Naive thymus-derived CD4-positive, alpha-beta T cell (primary cell): ENCODE measurements at regions of chr10 and their contacts with region 1.

Region 1: GRCh38 chr10:3785257-3785850 is 345 bp upstream of the KLF6 start:
- DNase-seq: peak; percentile 99 to 100 (median 99)
- ATAC-seq: peak; percentile 86
- H3K4me3 ChIP-seq: peak overlapping the region; percentile 75
- H3K4me3 Mint-ChIP-seq: peak overlapping the region; percentile 85 to 99 (median 94)
- H3K27ac ChIP-seq: peak overlapping the region; percentile 99
- H3K27ac Mint-ChIP-seq: peak overlapping the region; percentile 93 to 99 (median 99)
- H3K4me1 ChIP-seq: peaks cover 21 to 30% of the 10 kb centered on the region in 2 donors
- H3K4me1 Mint-ChIP-seq: peaks cover 21 to 52% (median 37%) of the 10 kb centered on the region in 7 donors
- H3K27me3 ChIP-seq: no peaks in the 10 kb centered on the region
- H3K27me3 Mint-ChIP-seq: peaks cover 0 to 12% (median 0%) of the 10 kb centered on the region in 5 donors

Region 2: GRCh38 chr10:2202401-2202800 is 1583.0 kb before region 1 on chr10:
- CTCF ChIA-PET with region 1: no interaction called
- POLR2A ChIA-PET with region 1: no interaction called
- intact Hi-C with region 1: no loop called
- DNase-seq: no peak
- ATAC-seq: no peak
- H3K4me3 ChIP-seq: no peak overlapping the region
- H3K4me3 Mint-ChIP-seq: no peak overlapping the region
- H3K27ac ChIP-seq: no peak overlapping the region
- H3K27ac Mint-ChIP-seq: no peak overlapping the region
- H3K4me1 ChIP-seq: no peaks in the 10 kb centered on the region
- H3K4me1 Mint-ChIP-seq: no peaks in the 10 kb centered on the region
- H3K27me3 ChIP-seq: no peaks in the 10 kb centered on the region
- H3K27me3 Mint-ChIP-seq: peaks cover 0 to 20% (median 8%) of the 10 kb centered on the region in 5 donors

Region 3: DNA sequence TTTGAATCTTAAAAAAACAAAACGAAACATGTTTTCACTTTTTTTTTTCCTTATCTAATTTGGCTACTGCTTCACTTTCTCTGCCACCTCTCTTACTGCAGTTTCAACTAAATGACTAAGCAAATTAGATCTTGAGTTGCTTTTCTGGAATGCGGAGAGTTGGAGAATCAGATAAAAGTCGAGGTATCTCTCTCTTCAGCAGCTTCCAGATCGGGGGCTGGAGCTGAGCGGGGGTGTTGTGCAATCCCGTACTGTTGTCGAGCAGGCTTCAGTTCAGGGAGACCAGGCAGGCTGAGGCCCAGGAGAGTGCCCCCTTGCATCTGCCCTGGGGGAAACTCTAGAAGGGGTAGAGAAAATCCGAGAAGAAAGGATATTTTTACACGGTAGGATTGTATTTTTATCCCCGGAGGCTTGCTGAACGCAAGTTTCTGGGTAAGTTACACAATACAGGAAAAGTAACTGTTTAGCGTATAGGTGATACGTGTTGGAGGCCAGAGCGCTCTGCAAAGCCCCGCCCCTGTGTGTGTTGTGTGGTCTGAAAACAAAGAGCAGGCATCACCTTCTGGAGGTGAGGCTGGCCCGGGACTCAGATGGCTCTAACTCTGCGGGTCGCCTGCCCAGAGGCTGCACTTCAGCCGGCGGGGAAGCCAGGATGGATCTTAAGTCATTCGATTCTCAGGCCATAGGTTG is 116.9 kb before region 1 on chr10:
- CTCF ChIA-PET with region 1: no interaction called
- POLR2A ChIA-PET with region 1: interaction called, 17 read pairs
- intact Hi-C with region 1: loop called in 1 of 2 experiments (anchors 1 kb)
- DNase-seq: peak; percentile 34 to 85 (median 77)
- ATAC-seq: peak; percentile 91
- H3K4me3 ChIP-seq: peak overlapping the region; percentile 63
- H3K4me3 Mint-ChIP-seq: peak overlapping the region; percentile 82 to 98 (median 88)
- H3K27ac ChIP-seq: peak overlapping the region; percentile 65
- H3K27ac Mint-ChIP-seq: peak overlapping the region; percentile 36 to 96 (median 93)
- H3K4me1 ChIP-seq: peaks cover 33% of the 10 kb centered on the region in 2 donors
- H3K4me1 Mint-ChIP-seq: peaks cover 27 to 51% (median 40%) of the 10 kb centered on the region in 7 donors
- H3K27me3 ChIP-seq: no peaks in the 10 kb centered on the region
- H3K27me3 Mint-ChIP-seq: no peaks in the 10 kb centered on the region

Region 4: DNA sequence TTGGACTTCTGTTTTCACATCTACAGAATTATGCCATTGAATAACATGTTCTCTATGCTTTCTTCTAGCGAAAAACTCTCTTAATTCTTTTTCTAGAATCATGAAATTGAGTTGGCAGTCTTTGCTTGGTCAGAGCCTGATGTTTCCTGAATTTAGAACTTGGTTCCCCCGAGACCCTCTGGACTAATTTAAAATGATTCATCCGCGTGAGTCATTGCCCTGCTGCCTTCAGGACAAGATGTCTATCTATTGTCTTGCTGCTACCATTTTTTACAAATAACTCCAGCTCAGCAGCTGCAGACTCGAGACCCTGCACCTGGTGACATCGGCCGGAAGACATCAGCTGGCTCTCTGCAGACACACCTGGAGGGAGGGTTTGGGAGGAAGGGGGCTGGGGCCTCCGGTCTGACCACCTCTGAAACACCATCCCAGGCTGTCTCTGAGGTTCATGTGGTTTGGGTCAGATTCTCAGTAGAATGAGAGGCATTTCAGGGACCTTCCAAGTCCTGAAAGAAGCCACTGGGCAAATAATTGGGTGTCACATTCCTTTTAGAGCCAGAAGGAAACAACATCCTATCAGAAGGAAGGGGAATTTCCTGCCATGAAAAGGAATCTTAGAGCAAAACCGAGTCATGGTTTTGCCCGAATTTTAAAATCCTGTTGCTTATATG is 20.6 kb after region 1 on chr10:
- CTCF ChIA-PET with region 1: interaction called, 5 read pairs
- POLR2A ChIA-PET with region 1: interaction called, 401 read pairs
- intact Hi-C with region 1: loop called (anchors 1 kb)
- DNase-seq: peak in 3 of 9 donors; percentile 13 to 53 (median 31)
- ATAC-seq: no peak
- H3K4me3 ChIP-seq: peak overlapping the region; percentile 38
- H3K4me3 Mint-ChIP-seq: peak overlapping the region; percentile 14 to 86 (median 70)
- H3K27ac ChIP-seq: peak overlapping the region; percentile 82
- H3K27ac Mint-ChIP-seq: peak overlapping the region in 3 of 9 donors; percentile 97 to 99 (median 99)
- H3K4me1 ChIP-seq: peaks cover 70 to 83% of the 10 kb centered on the region in 2 donors
- H3K4me1 Mint-ChIP-seq: peaks cover 43 to 81% (median 74%) of the 10 kb centered on the region in 7 donors
- H3K27me3 ChIP-seq: no peaks in the 10 kb centered on the region
- H3K27me3 Mint-ChIP-seq: no peaks in the 10 kb centered on the region

Region 5: DNA sequence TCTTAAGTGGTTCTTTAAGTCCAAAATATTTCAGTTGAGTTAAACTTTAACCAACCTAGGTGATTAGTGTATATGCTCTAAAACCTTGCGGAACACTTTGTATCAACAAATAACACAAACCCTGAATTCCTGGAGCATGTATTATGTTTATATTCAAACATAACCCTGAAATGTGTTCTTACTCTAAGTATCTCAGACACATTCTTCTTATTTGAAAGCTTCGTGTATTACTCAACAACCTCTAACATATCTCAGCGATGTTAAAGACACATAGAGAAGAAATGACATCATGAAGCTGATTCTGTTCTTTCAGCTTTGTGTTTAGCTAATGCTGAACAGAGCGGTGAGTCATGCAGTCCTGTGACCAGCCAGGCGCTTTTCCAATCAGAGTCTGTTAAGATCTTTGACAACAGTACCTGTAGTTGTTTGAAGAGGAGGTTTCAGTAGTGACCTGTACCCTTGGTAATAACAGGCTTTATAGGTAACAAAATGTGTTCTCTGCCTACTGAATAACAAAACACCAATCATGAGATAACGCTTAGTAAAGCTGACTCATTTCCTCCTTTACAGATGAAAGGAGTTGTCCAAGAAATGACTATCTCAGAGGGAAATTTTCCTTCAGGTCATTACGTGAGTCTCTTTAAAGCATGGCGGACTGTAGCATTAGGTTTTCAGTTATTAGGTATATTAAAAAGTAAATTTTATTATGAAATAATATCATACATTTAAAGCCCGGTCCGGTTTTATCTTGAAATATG is 67.0 kb after region 1 on chr10:
- CTCF ChIA-PET with region 1: no interaction called
- POLR2A ChIA-PET with region 1: interaction called, 6 read pairs
- intact Hi-C with region 1: loop called in 1 of 2 experiments (anchors 1 kb)
- DNase-seq: peak in 2 of 9 donors; percentile 28 to 55
- ATAC-seq: peak; percentile 87
- H3K4me3 ChIP-seq: no peak overlapping the region
- H3K4me3 Mint-ChIP-seq: peak overlapping the region in 1 of 10 donors; percentile 55
- H3K27ac ChIP-seq: no peak overlapping the region
- H3K27ac Mint-ChIP-seq: peak overlapping the region in 3 of 9 donors; percentile 70 to 92 (median 80)
- H3K4me1 ChIP-seq: peaks cover 5 to 12% of the 10 kb centered on the region in 2 donors
- H3K4me1 Mint-ChIP-seq: peaks cover 0 to 35% (median 8%) of the 10 kb centered on the region in 7 donors
- H3K27me3 ChIP-seq: no peaks in the 10 kb centered on the region
- H3K27me3 Mint-ChIP-seq: no peaks in the 10 kb centered on the region

Region 6: GRCh38 chr10:3948843-3949242 is 163.5 kb after region 1 on chr10:
- CTCF ChIA-PET with region 1: no interaction called
- POLR2A ChIA-PET with region 1: interaction called, 22 read pairs
- intact Hi-C with region 1: loop called (anchors 1 to 2 kb)
- DNase-seq: peak; percentile 21 to 79 (median 61)
- ATAC-seq: peak; percentile 94
- H3K4me3 ChIP-seq: no peak overlapping the region
- H3K4me3 Mint-ChIP-seq: peak overlapping the region in 9 of 10 donors; percentile 16 to 67 (median 47)
- H3K27ac ChIP-seq: no peak overlapping the region
- H3K27ac Mint-ChIP-seq: peak overlapping the region; percentile 32 to 97 (median 78)
- H3K4me1 ChIP-seq: peaks cover 20 to 59% of the 10 kb centered on the region in 2 donors
- H3K4me1 Mint-ChIP-seq: peaks cover 14 to 60% (median 36%) of the 10 kb centered on the region in 7 donors
- H3K27me3 ChIP-seq: no peaks in the 10 kb centered on the region
- H3K27me3 Mint-ChIP-seq: no peaks in the 10 kb centered on the region

Region 7: GRCh38 chr10:4034907-4035598 is 249.7 kb after region 1 on chr10:
- CTCF ChIA-PET with region 1: no interaction called
- POLR2A ChIA-PET with region 1: interaction called, 15 read pairs
- intact Hi-C with region 1: loop called in 1 of 2 experiments (anchors 2 kb)
- DNase-seq: peak in 7 of 9 donors; percentile 6 to 41 (median 30)
- ATAC-seq: peak; percentile 78
- H3K4me3 ChIP-seq: peak overlapping the region; percentile 44
- H3K4me3 Mint-ChIP-seq: peak overlapping the region; percentile 73 to 91 (median 82)
- H3K27ac ChIP-seq: peak overlapping the region; percentile 22
- H3K27ac Mint-ChIP-seq: peak overlapping the region; percentile 67 to 91 (median 82)
- H3K4me1 ChIP-seq: peaks cover 4 to 11% of the 10 kb centered on the region in 2 donors
- H3K4me1 Mint-ChIP-seq: peaks cover 8 to 37% (median 17%) of the 10 kb centered on the region in 7 donors
- H3K27me3 ChIP-seq: no peaks in the 10 kb centered on the region
- H3K27me3 Mint-ChIP-seq: no peaks in the 10 kb centered on the region

Region 8: GRCh38 chr10:4121502-4122380 is 336.4 kb after region 1 on chr10:
- CTCF ChIA-PET with region 1: no interaction called
- POLR2A ChIA-PET with region 1: no interaction called
- intact Hi-C with region 1: no loop called
- DNase-seq: no peak
- ATAC-seq: peak; percentile 46
- H3K4me3 ChIP-seq: no peak overlapping the region
- H3K4me3 Mint-ChIP-seq: peak overlapping the region in 2 of 10 donors; percentile 22 to 67
- H3K27ac ChIP-seq: no peak overlapping the region
- H3K27ac Mint-ChIP-seq: peak overlapping the region in 1 of 9 donors; percentile 80
- H3K4me1 ChIP-seq: no peaks in the 10 kb centered on the region
- H3K4me1 Mint-ChIP-seq: peaks cover 0 to 39% (median 9%) of the 10 kb centered on the region in 7 donors
- H3K27me3 ChIP-seq: no peaks in the 10 kb centered on the region
- H3K27me3 Mint-ChIP-seq: no peaks in the 10 kb centered on the region

Region 9: DNA sequence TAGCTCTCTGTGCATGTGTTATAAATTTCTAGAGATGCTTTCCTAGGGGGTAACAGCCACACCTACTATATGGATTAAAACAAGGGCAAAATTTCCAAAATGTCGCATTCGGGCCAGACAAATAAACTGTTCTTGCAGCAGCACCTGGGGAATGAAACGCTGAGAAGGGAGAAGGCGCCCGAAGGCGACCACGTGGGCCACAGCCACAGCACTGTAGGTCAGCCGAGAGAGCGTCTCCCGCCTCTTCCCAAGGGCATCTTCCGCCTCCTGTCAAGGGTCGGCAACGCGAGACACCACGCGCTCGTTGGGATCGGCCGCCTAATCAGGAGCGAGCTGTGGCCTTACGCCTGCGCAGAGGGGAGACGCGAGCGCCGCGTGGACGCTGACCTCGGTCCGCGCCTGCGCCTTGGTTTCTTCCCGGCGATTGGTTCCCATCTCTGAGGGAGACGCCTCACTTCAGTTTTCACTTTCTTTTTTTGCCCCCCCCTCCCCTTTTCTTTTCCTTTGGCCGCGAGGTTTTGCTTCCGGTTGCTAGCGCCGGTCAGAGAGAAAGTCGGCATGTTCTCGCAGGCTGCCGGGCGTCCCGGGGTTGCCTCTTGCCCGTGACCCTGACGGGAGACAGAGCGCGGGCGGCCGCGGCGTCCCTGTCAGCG is 1899.1 kb after region 1 on chr10 and contains the start of gene TASOR2:
- CTCF ChIA-PET with region 1: no interaction called
- POLR2A ChIA-PET with region 1: no interaction called
- intact Hi-C with region 1: no loop called
- DNase-seq: peak; percentile 91 to 96 (median 93)
- ATAC-seq: peak; percentile 92
- H3K4me3 ChIP-seq: peak within 1 kb of the TSS; percentile 76
- H3K4me3 Mint-ChIP-seq: peak within 1 kb of the TSS; percentile 93 to 100 (median 98)
- H3K27ac ChIP-seq: peak within 1 kb of the TSS; percentile 96
- H3K27ac Mint-ChIP-seq: peak within 1 kb of the TSS; percentile 90 to 99 (median 98)
- H3K4me1 ChIP-seq: peaks cover 15 to 24% of the 10 kb centered on the region in 2 donors
- H3K4me1 Mint-ChIP-seq: peaks cover 31 to 55% (median 44%) of the 10 kb centered on the region in 7 donors
- H3K27me3 ChIP-seq: no peaks in the 10 kb centered on the region
- H3K27me3 Mint-ChIP-seq: peaks cover 0 to 12% (median under 1%) of the 10 kb centered on the region in 5 donors
- total RNA-seq, gene TASOR2: 55.0 to 86.5 (median 62.1) TPM